Sciatic nerve (tissue), 2 donors: ENCODE measurements at regions of chr1 and their contacts with region 1.

Region 1: DNA sequence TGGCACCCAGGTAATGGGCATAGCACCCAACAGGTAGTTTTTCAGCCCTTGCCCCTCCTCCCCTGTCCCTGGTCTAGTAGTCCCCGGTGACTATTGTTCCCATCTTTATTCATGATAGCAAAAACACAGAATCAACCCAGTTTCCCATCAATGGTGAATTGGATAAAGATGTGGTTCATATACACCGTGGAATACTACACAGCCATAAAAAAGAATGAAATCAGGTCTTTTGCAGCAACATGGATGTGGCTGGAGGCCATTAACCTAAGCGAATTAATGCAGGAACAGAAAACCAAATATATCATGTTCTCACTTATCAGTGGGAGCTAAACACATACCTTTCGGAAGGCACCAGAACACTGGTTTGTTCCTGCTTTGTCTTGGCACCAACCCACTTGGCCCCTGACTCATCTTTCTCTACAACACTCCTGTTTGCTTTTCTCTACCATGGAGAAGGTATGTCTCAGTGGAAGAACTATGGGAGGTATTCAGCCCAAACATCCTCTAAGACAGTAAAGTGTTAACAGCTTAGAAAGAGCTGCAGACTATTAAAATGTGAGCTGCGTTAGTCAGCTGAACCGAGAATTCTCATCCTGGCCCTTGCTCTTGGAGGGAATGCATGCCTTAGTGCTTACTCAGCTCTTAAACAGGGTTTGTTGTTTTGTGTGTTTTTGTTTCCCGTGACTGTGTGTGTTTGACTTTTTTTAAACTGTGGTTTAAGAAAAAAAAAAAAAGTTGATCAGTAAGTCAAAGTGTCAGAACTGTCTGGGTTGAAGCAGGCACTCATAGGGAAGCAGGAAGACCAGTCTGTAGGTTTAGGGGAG is 203.0 kb downstream of the TOMM20 start:
- DNase-seq: peak; percentile 47
- ATAC-seq: peak; percentile 90

Region 2: DNA sequence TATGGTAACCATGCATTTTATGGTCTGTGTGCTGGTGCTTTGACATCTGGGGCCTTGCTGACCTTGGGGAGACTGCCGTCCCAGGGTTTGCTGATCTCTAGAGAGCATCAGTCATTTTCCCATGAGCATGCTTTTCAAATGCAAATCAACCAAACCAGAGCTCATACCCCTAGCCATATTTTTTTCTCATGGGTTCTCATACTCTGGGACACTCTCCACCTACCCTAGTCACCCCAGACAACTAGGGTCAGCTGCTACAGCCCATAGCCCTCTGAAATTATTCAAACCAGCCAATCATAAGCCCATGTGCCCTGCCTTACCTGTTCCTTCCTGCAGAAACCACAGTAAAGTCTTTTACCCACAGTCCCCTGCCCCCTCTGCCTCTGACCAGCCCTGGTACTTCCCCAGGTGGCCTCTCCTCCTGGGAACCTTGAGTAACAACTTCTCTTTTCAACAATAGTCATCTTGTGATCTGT is 1466.1 kb before region 1 on chr1:
- intact Hi-C with region 1: no loop called
- DNase-seq: no peak
- ATAC-seq: no peak

Region 3: DNA sequence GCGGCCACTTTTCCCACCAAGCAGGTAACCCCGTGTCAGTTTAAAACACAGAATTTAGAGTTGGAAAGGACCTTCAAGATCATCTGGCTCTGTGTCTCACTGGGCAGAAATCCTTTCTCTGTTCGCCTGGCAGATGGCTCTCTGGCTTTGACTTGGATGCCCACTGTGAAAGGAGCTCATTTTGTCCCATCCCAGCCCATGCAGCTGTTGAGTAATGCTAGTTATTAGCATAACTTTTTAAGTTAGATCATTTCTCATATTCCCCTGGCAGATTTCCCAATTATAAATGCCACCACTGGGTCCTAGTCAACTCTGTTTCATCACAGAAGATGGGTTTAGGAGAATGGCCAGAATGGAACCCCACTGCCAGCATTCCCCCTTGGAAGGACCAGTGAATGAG is 965.3 kb before region 1 on chr1:
- intact Hi-C with region 1: loop called (anchors 10 kb)
- DNase-seq: no peak
- ATAC-seq: no peak

Region 4: GRCh38 chr1:234912548-234913277 is 12.9 kb before region 1 on chr1:
- intact Hi-C with region 1: no loop called
- DNase-seq: peak; percentile 40
- ATAC-seq: no peak